Tibial artery (tissue), 4 donors: ENCODE measurements at regions of chr3 and their contacts with region 1.

Region 1: GRCh38 chr3:150495563-150496168 is 50.6 kb downstream of the SERP1 start:
- DNase-seq: no peak
- H3K4me3 ChIP-seq: no peak overlapping the region
- H3K27ac ChIP-seq: no peak overlapping the region
- H3K4me1 ChIP-seq: no peaks in the 10 kb centered on the region
- H3K27me3 ChIP-seq: no peaks in the 10 kb centered on the region
- CTCF ChIP-seq: peak; percentile 75 to 80

Region 2: GRCh38 chr3:149657926-149658733 is 837.5 kb before region 1 on chr3 and contains the start of gene WWTR1:
- intact Hi-C with region 1: no loop called
- DNase-seq: peak; percentile 96 to 98
- H3K4me3 ChIP-seq: peak within 1 kb of the TSS; percentile 71 to 76
- H3K27ac ChIP-seq: peak within 1 kb of the TSS; percentile 96 to 98
- H3K4me1 ChIP-seq: peaks cover 0 to 43% (median 29%) of the 10 kb centered on the region in 4 donors
- H3K27me3 ChIP-seq: no peaks in the 10 kb centered on the region
- CTCF ChIP-seq: peak in 1 of 2 experiments; percentile 28

Region 3: DNA sequence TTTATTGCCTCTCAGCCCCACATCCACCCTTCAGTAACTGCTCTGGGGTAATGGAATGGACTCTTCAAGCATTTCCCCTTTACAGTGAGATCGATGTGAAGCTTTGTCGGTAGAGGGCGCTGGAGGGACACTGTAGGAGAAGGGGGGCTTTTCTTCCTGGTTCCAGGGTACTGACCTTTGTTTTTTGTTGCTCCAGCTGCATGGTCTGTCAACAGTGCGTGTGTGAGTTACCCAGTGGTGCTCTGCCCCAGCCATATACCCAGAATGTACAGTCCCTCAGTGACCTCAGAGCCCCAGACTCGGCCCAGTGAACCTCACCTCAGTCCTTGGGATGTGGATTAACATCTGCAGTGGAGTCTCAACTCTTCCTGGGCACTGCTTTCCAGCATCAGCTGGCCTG is 267.8 kb before region 1 on chr3:
- intact Hi-C with region 1: loop called (anchors 5 kb)
- DNase-seq: peak in 1 of 2 donors; percentile 46
- H3K4me3 ChIP-seq: no peak overlapping the region
- H3K27ac ChIP-seq: no peak overlapping the region
- H3K4me1 ChIP-seq: peaks cover 0 to 1% (median under 1%) of the 10 kb centered on the region in 4 donors
- H3K27me3 ChIP-seq: no peaks in the 10 kb centered on the region
- CTCF ChIP-seq: peak; percentile 56 to 62

Region 4: DNA sequence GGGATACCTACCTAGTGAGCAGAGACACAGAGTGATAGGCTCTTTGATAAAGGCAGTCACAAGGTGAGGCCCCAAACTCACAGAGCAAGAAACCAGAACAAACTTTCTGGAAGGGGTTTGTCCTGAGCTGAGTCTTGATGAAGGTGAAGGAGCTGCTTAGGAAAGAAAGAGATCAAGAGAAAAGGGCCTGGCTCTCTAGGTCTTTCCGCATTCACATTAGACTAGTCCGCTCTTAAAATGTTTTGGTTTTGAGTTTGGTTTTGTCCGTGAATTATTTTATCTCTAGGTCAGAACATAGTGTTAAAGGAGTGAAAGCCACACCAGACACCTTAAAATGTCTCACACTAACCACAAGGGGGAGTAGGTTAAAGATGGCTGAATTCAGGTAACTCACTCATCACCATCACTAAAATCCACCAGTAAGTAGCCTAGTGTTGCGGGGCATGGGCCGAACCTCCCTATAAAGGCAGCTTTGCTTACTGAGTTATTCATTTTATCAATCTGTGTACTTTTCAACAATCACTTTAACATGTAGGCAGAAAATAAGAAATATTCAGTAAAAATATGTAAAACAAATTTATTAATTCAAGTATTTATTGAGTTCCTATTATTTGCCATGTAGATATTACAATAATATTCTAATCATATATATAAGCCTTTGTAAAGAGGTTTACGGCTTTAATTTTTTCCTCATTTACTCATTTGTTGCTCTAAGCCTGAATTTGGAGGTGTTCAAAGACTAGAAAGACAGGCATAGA is 209.1 kb before region 1 on chr3:
- intact Hi-C with region 1: loop called (anchors 5 kb)
- DNase-seq: no peak
- H3K4me3 ChIP-seq: no peak overlapping the region
- H3K27ac ChIP-seq: no peak overlapping the region
- H3K4me1 ChIP-seq: no peaks in the 10 kb centered on the region
- H3K27me3 ChIP-seq: no peaks in the 10 kb centered on the region
- CTCF ChIP-seq: peak; percentile 45 to 57

Region 5: GRCh38 chr3:150396956-150397550 is 98.6 kb before region 1 on chr3:
- intact Hi-C with region 1: no loop called
- DNase-seq: no peak
- H3K4me3 ChIP-seq: no peak overlapping the region
- H3K27ac ChIP-seq: no peak overlapping the region
- H3K4me1 ChIP-seq: peaks cover 0 to 5% (median 0%) of the 10 kb centered on the region in 4 donors
- H3K27me3 ChIP-seq: no peaks in the 10 kb centered on the region
- CTCF ChIP-seq: no peak

Region 6: DNA sequence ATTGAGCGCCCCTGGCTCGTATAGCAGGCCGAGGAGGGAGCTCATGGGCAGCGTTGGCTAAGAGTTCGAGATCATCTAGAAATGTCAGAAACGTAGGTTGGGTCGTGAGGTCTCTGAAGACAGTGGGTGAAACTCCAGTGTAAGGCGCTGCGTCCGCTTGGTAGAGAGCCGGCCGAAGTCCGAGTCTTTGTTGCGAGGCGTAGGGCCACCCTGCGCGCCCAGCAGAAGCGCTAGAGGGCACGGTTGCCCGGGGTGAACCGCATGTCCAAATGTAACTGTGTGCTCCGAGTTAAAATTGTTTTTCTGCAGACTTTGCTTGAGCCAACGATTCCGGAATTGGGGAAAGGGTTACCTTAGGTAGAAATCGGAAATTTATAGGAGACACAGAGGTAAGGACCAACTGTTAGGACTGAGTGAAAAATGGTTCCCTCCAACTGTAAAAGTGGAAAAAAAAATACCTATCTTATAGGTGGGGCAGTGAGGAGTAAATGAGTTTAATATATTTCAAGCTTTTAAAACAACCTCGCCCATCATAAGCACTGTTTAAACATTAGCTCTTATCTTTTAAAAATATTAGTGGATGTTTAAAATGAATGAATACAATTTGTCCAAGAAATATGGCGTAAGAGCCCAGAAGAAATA is 268.3 kb after region 1 on chr3:
- intact Hi-C with region 1: no loop called
- DNase-seq: peak; percentile 58 to 88
- H3K4me3 ChIP-seq: peak overlapping the region; percentile 77 to 90
- H3K27ac ChIP-seq: peak overlapping the region; percentile 99
- H3K4me1 ChIP-seq: peaks cover 3 to 33% (median 20%) of the 10 kb centered on the region in 4 donors
- H3K27me3 ChIP-seq: no peaks in the 10 kb centered on the region
- CTCF ChIP-seq: peak; percentile 37 to 62

Region 7: GRCh38 chr3:150806185-150806835 is 310.6 kb after region 1 on chr3:
- intact Hi-C with region 1: no loop called
- DNase-seq: no peak
- H3K4me3 ChIP-seq: no peak overlapping the region
- H3K27ac ChIP-seq: no peak overlapping the region
- H3K4me1 ChIP-seq: no peaks in the 10 kb centered on the region
- H3K27me3 ChIP-seq: no peaks in the 10 kb centered on the region
- CTCF ChIP-seq: no peak